ENCODE measurements at regions of chr12 and their contacts with region 1.

Region 1: DNA sequence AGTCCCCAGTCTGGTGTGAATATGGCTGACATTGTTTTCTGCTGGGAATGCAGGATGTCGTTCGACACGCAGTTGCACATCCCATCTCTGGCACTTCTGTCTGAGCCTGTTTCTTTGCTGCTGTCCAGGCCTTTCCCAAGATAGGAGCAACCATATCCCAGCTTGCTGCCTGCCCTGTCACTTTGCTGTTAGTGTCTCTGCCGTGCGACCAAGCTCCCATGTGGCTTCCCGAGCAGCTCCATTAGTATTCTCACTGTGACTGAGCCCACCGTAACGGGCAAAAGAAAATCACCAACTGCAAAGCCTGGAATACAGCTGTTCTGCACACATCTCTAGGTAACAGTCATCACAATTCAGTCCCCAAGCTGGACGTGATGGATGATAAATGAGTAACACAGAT is 66.0 kb upstream of the CPSF6 start:
- DNase-seq: no peak
- H3K4me3 ChIP-seq: no peak overlapping the region
- H3K27ac ChIP-seq: no peak overlapping the region
- H3K4me1 ChIP-seq: no peaks in the 10 kb centered on the region
- H3K27me3 ChIP-seq: no peaks in the 10 kb centered on the region
- CTCF ChIP-seq: no peak
- EP300 ChIP-seq: no peak
- POLR2A ChIP-seq: no peak

Region 2: GRCh38 chr12:69123919-69124638 is 49.3 kb before region 1 on chr12:
- in situ Hi-C with region 1: no loop called
- intact Hi-C with region 1: loop called (anchors 2 kb)
- DNase-seq: no peak
- H3K4me3 ChIP-seq: no peak overlapping the region
- H3K27ac ChIP-seq: peak overlapping the region in 2 of 4 donors; percentile 31 to 40
- H3K4me1 ChIP-seq: peaks cover 0 to 21% (median 7%) of the 10 kb centered on the region in 4 donors
- H3K27me3 ChIP-seq: no peaks in the 10 kb centered on the region
- CTCF ChIP-seq: no peak
- EP300 ChIP-seq: no peak
- POLR2A ChIP-seq: no peak

Region 3: DNA sequence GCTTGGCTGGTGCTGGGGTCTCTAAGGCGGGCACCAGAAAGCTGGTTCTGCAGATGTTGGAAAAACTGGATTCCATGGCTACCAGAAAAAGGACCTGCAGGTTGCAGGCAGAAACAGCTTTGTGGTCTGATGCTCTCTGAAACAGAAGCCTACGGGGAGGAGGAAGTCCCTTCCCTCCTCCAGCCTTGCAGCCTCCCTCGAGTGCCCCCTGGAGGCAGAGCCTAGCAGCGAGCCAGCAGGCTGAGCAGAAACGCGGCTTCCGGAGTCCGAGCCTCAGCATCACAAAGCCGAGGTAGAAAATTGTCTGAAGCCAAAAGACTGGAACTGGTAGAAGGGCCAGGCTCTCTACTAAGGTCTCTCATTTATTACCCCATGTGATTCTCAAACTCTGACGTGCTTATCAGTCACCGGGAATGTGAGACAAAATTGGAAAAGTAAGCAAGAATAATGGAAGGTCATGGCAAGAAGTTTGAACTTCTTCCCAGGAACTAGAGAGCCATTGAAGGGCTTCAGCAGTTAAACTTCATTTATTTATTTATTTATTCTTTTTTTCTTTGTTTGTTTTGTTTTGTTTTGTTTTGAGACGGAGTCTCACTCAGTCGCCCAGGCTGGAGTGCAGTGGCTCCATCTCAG is 16.2 kb before region 1 on chr12:
- in situ Hi-C with region 1: no loop called
- intact Hi-C with region 1: no loop called
- DNase-seq: peak; percentile 94
- H3K4me3 ChIP-seq: no peak overlapping the region
- H3K27ac ChIP-seq: peak overlapping the region in 1 of 4 donors; percentile 34
- H3K4me1 ChIP-seq: peaks cover 0 to 31% (median 4%) of the 10 kb centered on the region in 4 donors
- H3K27me3 ChIP-seq: no peaks in the 10 kb centered on the region
- CTCF ChIP-seq: peak; percentile 86 to 96 (median 90)
- EP300 ChIP-seq: no peak
- POLR2A ChIP-seq: no peak